ENCODE measurements at regions of chr17 and their contacts with region 1.

Region 1: DNA sequence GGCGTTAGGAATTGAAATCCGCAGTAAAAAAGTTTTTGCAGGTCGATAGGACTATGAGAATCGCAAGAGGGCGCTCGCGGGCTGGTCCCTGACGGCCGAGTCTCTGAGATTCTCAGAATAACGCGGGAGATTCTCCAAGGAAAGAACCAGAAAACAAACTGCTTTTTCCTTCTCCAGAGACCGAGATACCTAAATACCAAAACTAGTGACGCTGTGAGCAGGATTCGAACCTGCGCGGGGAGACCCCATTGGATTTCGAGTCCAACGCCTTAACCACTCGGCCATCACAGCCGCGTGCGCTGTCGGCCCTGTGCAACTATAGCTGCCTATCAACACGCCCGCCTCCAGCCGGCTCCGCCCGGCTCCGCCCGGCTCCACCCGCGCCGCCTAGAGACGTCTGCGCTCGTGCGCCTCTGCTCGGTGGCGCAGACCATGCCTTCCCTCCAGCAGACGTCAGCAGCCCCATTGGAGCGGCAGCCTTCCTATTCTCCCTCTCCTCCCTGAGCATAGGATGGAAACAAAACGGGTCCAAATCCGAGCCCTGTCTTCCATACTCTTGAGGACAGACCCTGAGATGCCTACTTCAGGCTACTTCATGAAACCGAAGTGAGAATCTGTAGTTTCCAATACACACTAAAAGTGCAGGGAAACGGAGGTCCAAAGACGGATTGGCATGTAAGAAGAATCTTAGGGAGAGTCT is 13.4 kb downstream of the PER1 start:
- DNase-seq: peak; percentile 85
- H3K4me3 ChIP-seq: peak overlapping the region; percentile 65
- CTCF ChIP-seq: peak; percentile 79

Region 2: GRCh38 chr17:7944326-7944725 is 194.5 kb before region 1 on chr17:
- CTCF ChIA-PET with region 1: no interaction called
- POLR2A ChIA-PET with region 1: no interaction called
- DNase-seq: no peak
- H3K4me3 ChIP-seq: no peak overlapping the region
- CTCF ChIP-seq: no peak

Region 3: GRCh38 chr17:8125157-8125946 is 13.5 kb before region 1 on chr17:
- CTCF ChIA-PET with region 1: interaction called, 49 read pairs
- POLR2A ChIA-PET with region 1: no interaction called
- DNase-seq: no peak
- H3K4me3 ChIP-seq: peak overlapping the region; percentile 77
- CTCF ChIP-seq: no peak

Region 4: GRCh38 chr17:8151123-8151640 is 12.4 kb after region 1 on chr17:
- CTCF ChIA-PET with region 1: interaction called, 38 read pairs
- POLR2A ChIA-PET with region 1: interaction called, 9 read pairs
- DNase-seq: peak; percentile 51
- H3K4me3 ChIP-seq: peak overlapping the region; percentile 95
- CTCF ChIP-seq: peak; percentile 0